ENCODE measurements at regions of chr19 and their contacts with region 1.

Region 1: DNA sequence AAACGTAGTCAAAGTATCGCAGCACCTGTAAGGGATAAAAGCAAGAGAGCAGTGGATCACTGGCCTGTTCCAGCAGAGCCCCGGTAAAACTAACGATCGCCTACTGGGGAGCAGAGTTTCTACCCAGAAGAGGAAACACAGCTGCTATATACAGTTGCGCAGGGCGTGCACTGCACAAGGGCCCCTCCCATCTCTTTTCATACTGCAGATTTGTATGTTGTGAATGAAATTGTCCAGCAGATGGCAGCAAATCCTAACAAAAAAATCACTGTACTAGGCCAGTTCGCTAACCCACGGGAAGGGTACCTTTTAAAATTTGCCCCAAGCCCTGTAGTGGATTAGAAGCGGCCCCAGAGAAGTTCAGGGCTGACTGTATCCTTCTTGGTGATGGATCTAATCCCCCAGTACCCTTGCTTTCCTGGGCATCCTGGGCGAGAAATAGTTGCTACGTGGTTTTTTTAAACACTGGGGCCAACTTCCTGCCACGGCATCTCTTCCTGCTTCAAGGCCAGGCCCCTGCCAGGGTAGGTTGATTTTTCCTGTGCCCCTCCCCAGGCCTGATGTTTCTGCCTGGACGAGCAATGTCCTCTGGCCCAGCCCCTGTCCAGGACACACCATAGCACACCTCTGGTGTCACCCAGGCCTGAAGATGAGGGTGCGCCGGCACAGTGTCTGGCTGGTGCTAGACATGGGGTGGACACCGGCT is 127.0 kb downstream of the IER2 start:
- DNase-seq: peak; percentile 65

Region 2: GRCh38 chr19:13262450-13262849 is 14.8 kb before region 1 on chr19:
- CTCF ChIA-PET with region 1: interaction called, 10 read pairs
- POLR2A ChIA-PET with region 1: no interaction called
- DNase-seq: peak; percentile 52

Region 3: GRCh38 chr19:13298565-13299481 is 21.6 kb after region 1 on chr19:
- CTCF ChIA-PET with region 1: no interaction called
- POLR2A ChIA-PET with region 1: no interaction called
- DNase-seq: no peak

Region 4: DNA sequence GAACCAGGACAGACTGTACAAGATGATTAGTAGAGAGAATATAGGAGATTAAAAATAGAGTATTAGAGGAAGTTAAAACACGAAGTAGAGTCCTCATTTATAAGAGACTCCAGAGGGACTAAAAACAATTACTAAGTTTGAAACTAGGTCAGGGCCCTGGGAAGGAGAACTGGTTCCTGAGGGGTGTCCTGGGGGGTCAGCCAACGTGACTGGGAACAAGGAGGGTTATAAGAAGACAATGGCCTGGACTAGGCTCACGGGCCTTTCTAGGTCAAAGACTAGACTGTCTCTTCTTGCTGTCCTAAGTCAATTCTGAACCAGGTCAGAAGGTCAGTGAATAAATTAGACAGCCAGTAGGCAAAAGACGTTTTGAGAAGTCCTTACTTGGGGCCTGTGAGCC is 38.2 kb after region 1 on chr19:
- CTCF ChIA-PET with region 1: no interaction called
- POLR2A ChIA-PET with region 1: no interaction called
- DNase-seq: no peak

Measured in HEK293T (cell line).